ENCODE measurements at regions of chr12 and their contacts with region 1.

Region 1: GRCh38 chr12:113196996-113197395 is 11.5 kb downstream of the RITA1 start:
- DNase-seq: no peak
- ATAC-seq: peak; percentile 98
- H3K4me3 ChIP-seq: no peak overlapping the region
- H3K27ac ChIP-seq: no peak overlapping the region
- H3K4me1 ChIP-seq: no peaks in the 10 kb centered on the region
- H3K27me3 ChIP-seq: no peaks in the 10 kb centered on the region
- CTCF ChIP-seq: peak; percentile 73 to 82 (median 81)
- EP300 ChIP-seq: no peak
- POLR2A ChIP-seq: no peak
- RAD21 ChIP-seq: peak; percentile 90

Region 2: DNA sequence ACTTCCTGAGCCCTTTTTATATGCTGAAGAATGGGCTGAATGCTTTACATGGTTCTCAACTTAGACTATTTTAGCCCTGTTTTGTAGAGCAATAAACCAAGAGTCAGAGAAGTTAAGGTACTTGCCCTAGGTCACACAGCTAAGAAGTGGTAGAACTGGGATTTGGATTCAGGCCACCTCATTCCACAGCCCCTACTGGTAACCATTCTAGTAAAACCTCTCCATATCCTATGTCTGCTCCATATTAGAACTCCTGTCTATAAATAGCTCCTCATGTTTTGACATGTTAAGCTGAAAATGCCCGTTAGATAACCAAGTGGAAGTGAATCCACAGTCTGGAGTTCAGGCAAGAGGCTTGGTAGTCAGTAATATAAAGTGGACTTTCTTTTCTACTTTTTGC is 926.3 kb before region 1 on chr12:
- CTCF ChIA-PET with region 1: no interaction called
- POLR2A ChIA-PET with region 1: no interaction called
- RAD21 ChIA-PET with region 1: no interaction called
- SMC1A ChIA-PET with region 1: no interaction called
- in situ Hi-C with region 1: no loop called
- intact Hi-C with region 1: no loop called
- DNase-seq: no peak
- ATAC-seq: no peak
- H3K4me3 ChIP-seq: no peak overlapping the region
- H3K27ac ChIP-seq: no peak overlapping the region
- H3K4me1 ChIP-seq: no peaks in the 10 kb centered on the region
- H3K27me3 ChIP-seq: no peaks in the 10 kb centered on the region
- CTCF ChIP-seq: no peak
- EP300 ChIP-seq: no peak
- POLR2A ChIP-seq: no peak
- RAD21 ChIP-seq: no peak

Region 3: DNA sequence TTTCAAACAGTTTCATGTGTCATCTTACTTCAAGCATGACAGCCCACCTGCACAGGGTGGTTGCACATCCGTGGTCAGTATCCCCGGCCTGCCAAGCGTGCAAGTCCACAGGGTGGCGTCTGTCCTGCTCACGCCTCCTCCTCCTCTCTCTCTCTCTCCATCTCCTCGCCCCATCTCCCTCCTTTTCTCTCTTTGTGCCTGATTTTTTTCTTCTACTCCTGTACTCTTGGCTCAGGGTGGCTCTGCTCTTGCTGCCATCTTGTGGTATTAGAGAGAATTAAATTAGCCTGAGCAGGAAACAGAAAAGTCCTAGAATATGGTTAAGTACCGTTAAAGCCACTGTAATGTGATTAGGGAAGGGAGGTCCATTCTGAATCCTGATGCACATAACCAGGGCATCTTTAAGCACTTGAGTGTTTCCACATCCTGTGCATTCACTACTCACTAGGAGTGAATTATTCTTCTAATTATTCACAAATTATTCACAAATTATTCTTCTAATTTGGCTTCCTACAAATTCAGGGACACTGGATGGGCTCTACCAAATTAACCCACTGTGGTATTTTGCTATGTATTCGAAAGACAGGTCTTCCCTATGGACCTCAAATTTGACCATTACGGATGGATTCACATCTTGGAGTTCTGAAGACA is 166.0 kb before region 1 on chr12:
- CTCF ChIA-PET with region 1: no interaction called
- POLR2A ChIA-PET with region 1: no interaction called
- RAD21 ChIA-PET with region 1: no interaction called
- SMC1A ChIA-PET with region 1: no interaction called
- in situ Hi-C with region 1: no loop called
- intact Hi-C with region 1: no loop called
- DNase-seq: no peak
- ATAC-seq: peak; percentile 84
- H3K4me3 ChIP-seq: no peak overlapping the region
- H3K27ac ChIP-seq: no peak overlapping the region
- H3K4me1 ChIP-seq: no peaks in the 10 kb centered on the region
- H3K27me3 ChIP-seq: no peaks in the 10 kb centered on the region
- CTCF ChIP-seq: peak; percentile 65 to 67 (median 65)
- EP300 ChIP-seq: no peak
- POLR2A ChIP-seq: no peak
- RAD21 ChIP-seq: peak; percentile 75

Region 4: GRCh38 chr12:113208041-113208934 is 11.3 kb after region 1 on chr12:
- CTCF ChIA-PET with region 1: interaction called, 12 read pairs
- POLR2A ChIA-PET with region 1: interaction called, 3 read pairs
- RAD21 ChIA-PET with region 1: interaction called, 6 read pairs
- SMC1A ChIA-PET with region 1: interaction called, 10 read pairs
- in situ Hi-C with region 1: no loop called
- intact Hi-C with region 1: no loop called
- DNase-seq: peak; percentile 99
- ATAC-seq: peak; percentile 84
- H3K4me3 ChIP-seq: peak overlapping the region; percentile 16; the same call in 1 of the 2 replicates
- H3K27ac ChIP-seq: peak overlapping the region; percentile 84
- H3K4me1 ChIP-seq: peaks cover 54% of the 10 kb centered on the region
- H3K27me3 ChIP-seq: no peaks in the 10 kb centered on the region
- CTCF ChIP-seq: no peak
- EP300 ChIP-seq: peak; percentile 94 to 95
- POLR2A ChIP-seq: peak; percentile 75
- RAD21 ChIP-seq: peak; percentile 17; the same call in 1 of the 2 replicates

Region 5: DNA sequence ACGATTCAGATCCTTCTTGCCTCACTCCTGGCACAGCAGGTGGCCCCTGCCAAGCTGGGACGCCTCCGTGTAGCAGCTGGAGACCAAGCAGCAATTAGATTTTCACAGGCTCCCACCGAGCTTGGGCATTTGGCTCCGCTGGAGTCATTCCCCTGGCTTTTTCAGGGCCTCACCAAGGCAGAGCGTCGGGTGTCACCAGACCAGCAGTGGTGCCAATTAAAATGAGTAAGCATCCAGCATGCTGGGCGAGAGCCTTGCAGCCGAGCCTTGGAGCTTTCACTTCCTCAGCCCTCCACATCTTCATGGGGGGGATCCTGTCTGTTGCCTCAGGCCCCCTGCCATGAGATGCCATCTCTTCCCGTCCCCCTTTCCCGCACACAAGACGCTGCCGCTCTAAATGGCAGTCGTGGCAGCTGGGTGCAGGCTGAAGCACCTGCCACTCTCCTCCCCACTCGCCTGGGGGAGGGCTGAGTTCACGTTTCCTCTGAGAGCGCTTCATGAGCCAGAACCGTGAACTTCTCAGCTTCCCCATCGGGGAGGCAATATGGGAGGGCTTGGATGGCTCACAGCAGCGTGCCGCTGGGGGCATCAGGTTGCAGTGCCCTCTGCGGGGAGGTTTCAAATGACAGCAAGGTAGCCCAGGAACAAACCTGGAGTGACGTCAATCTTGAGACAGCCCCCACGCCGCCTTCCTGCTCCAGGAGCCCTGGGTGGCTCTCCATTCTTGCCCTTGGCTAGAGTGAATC is 36.0 kb after region 1 on chr12:
- CTCF ChIA-PET with region 1: interaction called, 10 read pairs
- POLR2A ChIA-PET with region 1: interaction called, 5 read pairs
- RAD21 ChIA-PET with region 1: interaction called, 8 read pairs
- SMC1A ChIA-PET with region 1: interaction called, 13 read pairs
- in situ Hi-C with region 1: no loop called
- intact Hi-C with region 1: loop called (anchors 2 kb)
- DNase-seq: peak; percentile 69
- ATAC-seq: peak; percentile 78
- H3K4me3 ChIP-seq: no peak overlapping the region; the same call in 1 of the 2 replicates
- H3K27ac ChIP-seq: peak overlapping the region; percentile 86
- H3K4me1 ChIP-seq: peaks cover 57% of the 10 kb centered on the region
- H3K27me3 ChIP-seq: no peaks in the 10 kb centered on the region
- CTCF ChIP-seq: peak; percentile 34 to 53 (median 51); a peak in 4 of 6 replicates
- EP300 ChIP-seq: no peak
- POLR2A ChIP-seq: peak; percentile 72
- RAD21 ChIP-seq: peak; percentile 48

Region 6: DNA sequence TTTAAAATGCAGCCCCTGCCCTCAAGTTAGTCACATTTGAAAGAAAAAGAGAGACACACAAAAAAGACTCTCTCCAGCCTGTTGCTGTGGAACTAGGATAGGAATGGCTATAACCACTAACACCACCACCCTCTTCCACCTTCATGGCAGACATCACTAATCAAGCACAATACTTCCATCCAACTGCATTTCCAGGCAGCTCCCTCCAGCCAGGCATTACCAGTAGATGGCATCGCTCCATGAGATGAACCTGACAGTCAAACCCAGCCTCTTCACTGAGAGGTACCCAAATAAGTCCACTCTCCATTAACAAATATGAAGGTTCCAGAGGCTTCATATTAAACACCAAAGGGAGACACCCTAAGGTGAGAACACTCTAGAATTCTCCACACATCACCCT is 113.5 kb after region 1 on chr12:
- CTCF ChIA-PET with region 1: interaction called, 4 read pairs
- POLR2A ChIA-PET with region 1: interaction called, 3 read pairs
- RAD21 ChIA-PET with region 1: no interaction called
- SMC1A ChIA-PET with region 1: interaction called, 4 read pairs
- in situ Hi-C with region 1: no loop called
- intact Hi-C with region 1: loop called (anchors 5 kb)
- DNase-seq: no peak
- ATAC-seq: no peak
- H3K4me3 ChIP-seq: no peak overlapping the region
- H3K27ac ChIP-seq: no peak overlapping the region
- H3K4me1 ChIP-seq: no peaks in the 10 kb centered on the region
- H3K27me3 ChIP-seq: no peaks in the 10 kb centered on the region
- CTCF ChIP-seq: no peak
- EP300 ChIP-seq: no peak
- POLR2A ChIP-seq: no peak
- RAD21 ChIP-seq: no peak